CD4-positive, alpha-beta memory T cell (primary cell): ENCODE measurements at regions of chr11 and their contacts with region 1.

Region 1: GRCh38 chr11:119095066-119095880 is 6.4 kb downstream of the DPAGT1 start:
- DNase-seq: peak; percentile 99 to 100 (median 100)
- H3K4me3 ChIP-seq: peak overlapping the region; percentile 42 to 87
- H3K4me3 Mint-ChIP-seq: peak overlapping the region; percentile 84 to 97 (median 93)
- H3K27ac ChIP-seq: peak overlapping the region; percentile 81
- H3K27ac Mint-ChIP-seq: peak overlapping the region; percentile 86 to 96 (median 93)
- H3K4me1 ChIP-seq: peaks cover 34% of the 10 kb centered on the region
- H3K4me1 Mint-ChIP-seq: peaks cover 22 to 52% (median 38%) of the 10 kb centered on the region in 4 donors
- H3K27me3 ChIP-seq: no peaks in the 10 kb centered on the region
- H3K27me3 Mint-ChIP-seq: peaks cover 0 to 1% of the 10 kb centered on the region in 2 donors

Region 2: GRCh38 chr11:118997627-118998387 is 97.5 kb before region 1 on chr11 and contains the start of gene CENATAC:
- CTCF ChIA-PET with region 1: interaction called, 3 read pairs
- POLR2A ChIA-PET with region 1: interaction called, 9 read pairs
- intact Hi-C with region 1: loop called (anchors 1 kb)
- DNase-seq: peak; percentile 94 to 96 (median 95)
- H3K4me3 ChIP-seq: peak within 1 kb of the TSS; percentile 87 to 99
- H3K4me3 Mint-ChIP-seq: peak within 1 kb of the TSS; percentile 87 to 99 (median 98)
- H3K27ac ChIP-seq: peak within 1 kb of the TSS; percentile 75
- H3K27ac Mint-ChIP-seq: peak within 1 kb of the TSS; percentile 90 to 99 (median 95)
- H3K4me1 ChIP-seq: peaks cover 24% of the 10 kb centered on the region
- H3K4me1 Mint-ChIP-seq: peaks cover 18 to 52% (median 34%) of the 10 kb centered on the region in 4 donors
- H3K27me3 ChIP-seq: no peaks in the 10 kb centered on the region
- H3K27me3 Mint-ChIP-seq: no peaks in the 10 kb centered on the region
- total RNA-seq, gene CENATAC: 109 to 114 TPM

Region 3: GRCh38 chr11:119030329-119031049 is 64.8 kb before region 1 on chr11 and contains the start of gene SLC37A4:
- CTCF ChIA-PET with region 1: no interaction called
- POLR2A ChIA-PET with region 1: interaction called, 15 read pairs
- intact Hi-C with region 1: loop called (anchors 1 kb)
- DNase-seq: peak; percentile 98 to 99 (median 99)
- H3K4me3 ChIP-seq: peak within 1 kb of the TSS; percentile 61 to 91
- H3K4me3 Mint-ChIP-seq: peak within 1 kb of the TSS; percentile 78 to 91 (median 82)
- H3K27ac ChIP-seq: peak within 1 kb of the TSS; percentile 76
- H3K27ac Mint-ChIP-seq: peak within 1 kb of the TSS; percentile 64 to 95 (median 93)
- H3K4me1 ChIP-seq: peaks cover 19% of the 10 kb centered on the region
- H3K4me1 Mint-ChIP-seq: peaks cover 14 to 40% (median 19%) of the 10 kb centered on the region in 4 donors
- H3K27me3 ChIP-seq: no peaks in the 10 kb centered on the region
- H3K27me3 Mint-ChIP-seq: no peaks in the 10 kb centered on the region
- total RNA-seq, gene SLC37A4: 14.6 to 14.8 TPM

Region 4: DNA sequence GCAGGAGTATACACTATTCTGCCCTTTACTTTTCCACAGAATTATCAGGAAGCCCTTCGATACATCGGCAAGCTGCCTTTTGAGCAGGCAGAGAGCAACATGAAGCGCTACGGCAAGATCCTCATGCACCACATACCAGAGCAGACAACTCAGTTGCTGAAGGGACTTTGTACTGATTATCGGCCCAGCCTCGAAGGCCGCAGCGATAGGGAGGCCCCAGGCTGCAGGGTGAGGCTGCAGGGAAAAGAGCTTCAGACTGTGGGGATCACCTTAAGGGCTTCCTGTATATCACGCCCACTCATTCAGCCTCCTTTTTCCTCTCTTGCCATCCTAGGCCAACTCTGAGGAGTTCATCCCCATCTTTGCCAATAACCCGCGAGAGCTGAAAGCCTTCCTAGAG is 17.4 kb before region 1 on chr11:
- CTCF ChIA-PET with region 1: no interaction called
- POLR2A ChIA-PET with region 1: interaction called, 13 read pairs
- intact Hi-C with region 1: no loop called
- DNase-seq: no peak
- H3K4me3 ChIP-seq: no peak overlapping the region
- H3K4me3 Mint-ChIP-seq: no peak overlapping the region
- H3K27ac ChIP-seq: no peak overlapping the region
- H3K27ac Mint-ChIP-seq: peak overlapping the region in 1 of 7 donors; percentile 36
- H3K4me1 ChIP-seq: no peaks in the 10 kb centered on the region
- H3K4me1 Mint-ChIP-seq: peaks cover 0 to 1% (median under 1%) of the 10 kb centered on the region in 4 donors
- H3K27me3 ChIP-seq: no peaks in the 10 kb centered on the region
- H3K27me3 Mint-ChIP-seq: no peaks in the 10 kb centered on the region

Region 5: GRCh38 chr11:119121008-119121810 is 25.9 kb after region 1 on chr11 and contains the start of gene HINFP:
- CTCF ChIA-PET with region 1: interaction called, 5 read pairs
- POLR2A ChIA-PET with region 1: interaction called, 109 read pairs
- intact Hi-C with region 1: loop called (anchors 1 kb)
- DNase-seq: peak; percentile 97 to 100 (median 99)
- H3K4me3 ChIP-seq: peak within 1 kb of the TSS; percentile 78 to 90
- H3K4me3 Mint-ChIP-seq: peak within 1 kb of the TSS; percentile 88 to 99 (median 95)
- H3K27ac ChIP-seq: peak within 1 kb of the TSS; percentile 85
- H3K27ac Mint-ChIP-seq: peak within 1 kb of the TSS; percentile 90 to 98 (median 94)
- H3K4me1 ChIP-seq: peaks cover 33% of the 10 kb centered on the region
- H3K4me1 Mint-ChIP-seq: peaks cover 24 to 51% (median 28%) of the 10 kb centered on the region in 4 donors
- H3K27me3 ChIP-seq: no peaks in the 10 kb centered on the region
- H3K27me3 Mint-ChIP-seq: no peaks in the 10 kb centered on the region
- total RNA-seq, gene HINFP: 70.8 to 75.3 TPM

Region 6: DNA sequence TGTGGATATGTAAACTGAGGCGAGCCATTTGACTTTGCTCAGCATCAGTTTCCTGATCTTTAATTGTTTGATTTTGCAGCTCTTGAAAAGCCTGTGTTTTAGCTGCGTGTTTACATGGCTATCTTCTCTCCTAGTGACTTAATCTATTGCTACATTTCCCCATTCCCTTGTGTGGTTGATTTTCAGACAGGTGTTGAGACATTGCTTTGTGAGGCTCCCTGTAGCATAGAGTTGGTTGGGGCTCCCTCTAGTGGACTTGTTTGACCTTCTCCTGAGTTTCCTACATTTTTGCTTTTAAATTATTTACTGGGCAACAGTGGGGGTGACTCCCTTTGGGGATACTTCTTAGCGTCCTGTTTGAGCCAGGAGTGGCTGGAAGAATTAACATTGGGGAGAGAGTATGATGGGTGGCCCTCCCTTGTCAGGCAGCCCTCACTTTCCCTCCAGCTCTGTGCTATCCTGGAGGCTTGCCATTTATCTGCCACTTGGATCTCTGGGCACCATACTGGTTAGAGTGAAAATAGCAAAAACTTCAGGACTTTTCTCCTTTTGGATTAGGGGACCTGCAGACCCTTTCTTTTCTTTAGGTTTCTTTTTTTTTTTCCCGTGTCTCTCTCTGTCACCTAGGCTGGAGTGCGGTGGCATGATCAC is 101.7 kb after region 1 on chr11:
- CTCF ChIA-PET with region 1: interaction called, 12 read pairs
- POLR2A ChIA-PET with region 1: interaction called, 10 read pairs
- intact Hi-C with region 1: loop called (anchors 1 kb)
- DNase-seq: peak; percentile 73 to 79 (median 76)
- H3K4me3 ChIP-seq: no peak overlapping the region
- H3K4me3 Mint-ChIP-seq: peak overlapping the region in 1 of 8 donors; percentile 47
- H3K27ac ChIP-seq: no peak overlapping the region
- H3K27ac Mint-ChIP-seq: peak overlapping the region in 1 of 7 donors; percentile 43
- H3K4me1 ChIP-seq: no peaks in the 10 kb centered on the region
- H3K4me1 Mint-ChIP-seq: peaks cover 0 to 6% (median 3%) of the 10 kb centered on the region in 4 donors
- H3K27me3 ChIP-seq: no peaks in the 10 kb centered on the region
- H3K27me3 Mint-ChIP-seq: peaks cover 0 to 1% of the 10 kb centered on the region in 2 donors

Region 7: DNA sequence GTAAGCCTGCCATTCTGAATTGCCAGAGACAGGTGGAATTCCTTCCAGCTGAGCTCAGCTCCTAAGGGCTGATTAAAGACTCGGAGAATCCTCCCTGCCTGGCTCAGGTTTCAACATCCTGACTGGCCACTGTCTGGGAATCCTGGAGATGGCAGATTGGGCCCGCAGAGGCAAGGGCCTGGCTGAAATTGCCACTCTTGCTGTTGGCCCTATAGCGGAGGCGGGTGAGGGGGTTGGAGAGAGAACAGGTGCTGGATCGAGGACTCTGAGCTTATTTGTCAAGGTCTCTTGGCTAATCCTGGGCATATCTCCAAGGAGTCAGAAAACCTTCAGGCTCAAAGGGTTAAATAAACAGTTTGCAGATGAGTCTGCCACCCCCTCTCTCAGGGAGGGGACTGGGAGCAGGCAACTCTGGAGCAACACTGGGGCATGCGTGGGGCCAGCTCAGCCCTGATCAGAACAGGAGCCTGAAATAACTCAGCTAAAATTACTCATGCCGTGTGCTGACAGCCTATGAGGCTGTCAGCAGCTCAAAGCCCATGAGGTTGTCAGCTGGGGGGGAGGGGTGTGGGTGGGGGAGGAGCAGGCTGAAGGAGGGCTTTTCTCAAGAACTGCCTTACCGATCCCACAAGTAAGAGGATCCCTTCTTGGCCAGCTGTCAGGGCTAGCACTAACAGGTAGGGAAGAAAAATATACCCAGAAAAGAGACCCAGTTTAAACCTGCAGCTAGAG is 265.9 kb after region 1 on chr11:
- CTCF ChIA-PET with region 1: no interaction called
- POLR2A ChIA-PET with region 1: no interaction called
- intact Hi-C with region 1: no loop called
- DNase-seq: no peak
- H3K4me3 ChIP-seq: no peak overlapping the region
- H3K4me3 Mint-ChIP-seq: no peak overlapping the region
- H3K27ac ChIP-seq: no peak overlapping the region
- H3K27ac Mint-ChIP-seq: peak overlapping the region in 1 of 7 donors; percentile 63
- H3K4me1 ChIP-seq: peaks cover 7% of the 10 kb centered on the region
- H3K4me1 Mint-ChIP-seq: peaks cover 6 to 30% (median 12%) of the 10 kb centered on the region in 4 donors
- H3K27me3 ChIP-seq: peaks cover 14% of the 10 kb centered on the region
- H3K27me3 Mint-ChIP-seq: peaks cover 13 to 25% of the 10 kb centered on the region in 2 donors